Breast epithelium (tissue), 4 donors: ENCODE measurements at regions of chr1 and their contacts with region 1.

Region 1: GRCh38 chr1:7159116-7159781 is 374.0 kb downstream of the CAMTA1 start:
- DNase-seq: no peak
- H3K4me3 ChIP-seq: no peak overlapping the region
- H3K27ac ChIP-seq: no peak overlapping the region
- H3K4me1 ChIP-seq: no peaks in the 10 kb centered on the region
- H3K27me3 ChIP-seq: no peaks in the 10 kb centered on the region
- CTCF ChIP-seq: no peak
- POLR2A ChIP-seq: no peak

Region 2: GRCh38 chr1:6041432-6042062 is 1117.7 kb before region 1 on chr1:
- intact Hi-C with region 1: loop called (anchors 5 kb)
- DNase-seq: no peak
- H3K4me3 ChIP-seq: no peak overlapping the region
- H3K27ac ChIP-seq: no peak overlapping the region
- H3K4me1 ChIP-seq: no peaks in the 10 kb centered on the region
- H3K27me3 ChIP-seq: no peaks in the 10 kb centered on the region
- CTCF ChIP-seq: no peak
- POLR2A ChIP-seq: no peak